Panc1 (cell line): ENCODE measurements at regions of chr17 and their contacts with region 1.

Region 1: DNA sequence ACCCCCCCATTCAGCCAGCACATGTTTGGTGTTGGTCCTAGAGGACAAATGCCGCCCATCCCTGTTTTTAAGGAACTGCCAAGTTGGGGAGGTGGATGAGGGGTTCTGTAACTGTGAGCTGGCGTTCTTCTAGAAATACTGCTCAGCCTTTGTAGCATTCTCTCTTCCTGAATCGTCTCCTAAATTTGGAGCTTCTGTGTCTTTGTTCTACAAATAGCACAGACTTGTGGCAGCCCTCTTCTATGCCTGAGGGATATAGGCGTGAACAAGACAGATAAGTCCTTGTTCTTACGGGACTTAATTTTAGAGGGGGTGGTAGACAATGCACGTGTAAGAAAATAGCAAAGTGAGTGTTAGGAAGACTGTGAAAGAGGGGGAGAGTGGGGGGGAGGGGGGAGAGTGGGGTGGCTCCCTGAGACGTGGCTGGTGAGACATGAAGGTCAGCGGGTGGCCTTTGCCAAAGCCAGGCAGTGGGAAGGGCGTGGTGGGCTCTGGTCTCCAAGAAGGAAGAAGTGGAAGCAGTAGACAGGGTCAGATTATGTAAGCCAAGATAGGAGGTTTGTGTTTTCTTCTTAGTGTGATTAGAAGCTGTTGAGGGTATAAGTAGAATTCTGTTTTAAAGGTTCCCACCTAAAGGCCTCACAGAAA is 9.9 kb downstream of the MFSD11 start:
- DNase-seq: no peak
- ATAC-seq: no peak
- H3K4me3 ChIP-seq: no peak overlapping the region
- H3K27ac ChIP-seq: no peak overlapping the region
- H3K4me1 ChIP-seq: no peaks in the 10 kb centered on the region
- H3K27me3 ChIP-seq: no peaks in the 10 kb centered on the region
- CTCF ChIP-seq: no peak

Region 2: DNA sequence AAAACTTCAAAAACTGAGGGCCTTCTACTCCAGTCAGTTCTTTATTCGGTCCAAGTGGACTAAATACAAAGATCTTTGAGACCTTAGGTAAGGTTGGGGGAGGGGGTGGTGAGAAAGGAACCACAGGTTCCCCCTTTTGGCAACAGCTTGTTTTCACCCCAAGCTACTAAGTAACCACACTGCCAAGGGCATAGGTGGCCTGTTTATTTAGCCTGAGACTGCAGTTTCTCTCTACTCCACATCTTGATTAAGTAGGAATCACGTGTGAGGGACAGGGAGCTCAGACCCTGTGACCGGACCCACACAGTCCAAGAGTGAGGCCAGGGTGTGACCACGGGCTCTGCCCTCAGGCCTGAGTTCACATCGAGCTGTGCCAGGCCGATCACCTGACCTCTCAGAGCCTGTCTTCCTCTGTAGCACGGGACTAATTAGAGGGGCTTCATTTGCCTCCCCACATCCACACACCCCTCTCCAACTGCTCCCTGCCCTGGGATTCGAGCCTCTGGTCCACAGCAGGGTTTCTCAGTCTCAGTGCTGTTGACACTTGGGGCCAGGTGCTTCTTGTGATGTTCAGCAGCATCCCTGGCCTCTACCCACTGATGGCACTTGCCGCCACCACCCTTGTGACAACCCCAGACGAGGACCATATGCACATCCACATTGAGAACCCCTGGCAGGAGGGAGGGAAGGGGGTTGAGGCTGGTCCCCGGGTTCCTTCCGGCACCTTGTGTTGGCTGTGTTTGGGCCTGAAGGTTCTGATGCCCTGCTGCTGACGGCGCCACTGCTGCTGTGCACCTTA is 180.0 kb before region 1 on chr17:
- CTCF ChIA-PET with region 1: no interaction called
- POLR2A ChIA-PET with region 1: no interaction called
- in situ Hi-C with region 1: no loop called
- intact Hi-C with region 1: no loop called
- DNase-seq: no peak
- ATAC-seq: peak; percentile 32
- H3K4me3 ChIP-seq: no peak overlapping the region
- H3K27ac ChIP-seq: peak overlapping the region; percentile 85
- H3K4me1 ChIP-seq: peaks cover 58% of the 10 kb centered on the region
- H3K27me3 ChIP-seq: no peaks in the 10 kb centered on the region
- CTCF ChIP-seq: no peak

Region 3: DNA sequence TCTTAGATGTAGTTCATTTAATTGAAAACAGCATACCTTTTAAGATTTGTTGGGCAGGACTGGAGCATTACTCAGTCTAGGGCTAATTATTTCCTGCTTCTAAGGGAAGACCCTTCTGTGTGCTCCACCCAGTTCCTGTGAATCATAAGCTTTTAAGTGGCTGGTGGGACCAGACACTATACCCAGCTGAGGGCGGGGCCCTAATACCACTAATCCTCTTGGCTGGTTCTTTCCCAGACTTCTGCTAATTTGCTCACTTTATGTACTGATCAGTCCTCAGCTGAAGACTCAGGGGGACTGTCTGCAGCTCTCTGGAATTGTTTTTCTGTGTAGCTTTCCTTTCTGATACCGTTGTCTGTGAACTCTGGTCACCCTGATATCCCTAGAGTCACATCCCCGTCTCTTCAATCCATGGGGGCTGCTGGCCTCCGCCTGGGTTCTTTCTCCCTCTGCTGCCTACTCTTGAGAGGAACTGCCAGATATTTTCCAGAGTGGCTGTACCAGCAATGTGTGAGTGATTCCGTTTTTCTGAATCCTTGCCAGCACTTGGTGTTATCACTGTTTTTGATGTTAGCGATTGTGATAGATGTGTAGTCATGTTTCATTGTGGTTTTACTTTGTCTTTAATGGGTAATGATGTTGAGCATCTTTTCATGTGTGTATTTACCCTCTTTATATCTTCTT is 25.1 kb after region 1 on chr17:
- CTCF ChIA-PET with region 1: interaction called, 11 read pairs
- POLR2A ChIA-PET with region 1: no interaction called
- in situ Hi-C with region 1: no loop called
- intact Hi-C with region 1: no loop called
- DNase-seq: no peak
- ATAC-seq: peak; percentile 48; the same call in 1 of the 2 replicates
- H3K4me3 ChIP-seq: no peak overlapping the region
- H3K27ac ChIP-seq: no peak overlapping the region
- H3K4me1 ChIP-seq: no peaks in the 10 kb centered on the region
- H3K27me3 ChIP-seq: no peaks in the 10 kb centered on the region
- CTCF ChIP-seq: no peak

Region 4: GRCh38 chr17:77049440-77049839 is 301.6 kb after region 1 on chr17:
- CTCF ChIA-PET with region 1: no interaction called
- POLR2A ChIA-PET with region 1: no interaction called
- in situ Hi-C with region 1: no loop called
- intact Hi-C with region 1: no loop called
- DNase-seq: no peak
- ATAC-seq: no peak
- H3K4me3 ChIP-seq: no peak overlapping the region
- H3K27ac ChIP-seq: no peak overlapping the region
- H3K4me1 ChIP-seq: no peaks in the 10 kb centered on the region
- H3K27me3 ChIP-seq: no peaks in the 10 kb centered on the region
- CTCF ChIP-seq: no peak